Lower leg skin (tissue), 4 donors: ENCODE measurements at regions of chr9 and their contacts with region 1.

Region 1: GRCh38 chr9:93159601-93160471 is 24.1 kb upstream of the WNK2 start:
- DNase-seq: peak; percentile 60 to 96
- H3K4me3 ChIP-seq: no peak overlapping the region
- CTCF ChIP-seq: peak in 2 of 3 donors; percentile 38 to 83
- POLR2A ChIP-seq: no peak

Region 2: GRCh38 chr9:92917176-92917800 is 242.5 kb before region 1 on chr9:
- intact Hi-C with region 1: no loop called
- DNase-seq: no peak
- H3K4me3 ChIP-seq: no peak overlapping the region
- CTCF ChIP-seq: no peak
- POLR2A ChIP-seq: no peak

Region 3: DNA sequence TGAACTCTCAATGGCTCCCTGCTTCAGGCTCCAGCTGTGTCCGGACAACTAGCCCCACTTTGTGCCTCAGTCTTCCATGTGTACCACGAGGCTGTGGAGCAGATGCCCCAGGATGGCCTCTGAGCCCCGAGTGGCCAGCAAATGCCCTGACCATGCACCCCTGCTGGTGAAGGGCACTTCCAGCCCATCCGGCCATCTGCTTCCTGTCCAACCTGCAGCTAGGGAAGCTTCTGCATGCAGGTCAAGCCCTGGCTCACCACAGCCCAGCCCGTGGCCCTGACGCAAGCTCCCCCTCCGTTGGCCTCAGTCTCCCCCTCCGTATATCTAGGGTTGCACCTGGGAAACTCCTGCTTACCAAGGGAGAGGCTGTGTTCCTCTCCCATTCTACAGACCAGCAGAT is 30.6 kb before region 1 on chr9:
- intact Hi-C with region 1: loop called (anchors 1 kb)
- DNase-seq: no peak
- H3K4me3 ChIP-seq: no peak overlapping the region
- CTCF ChIP-seq: no peak
- POLR2A ChIP-seq: no peak

Region 4: DNA sequence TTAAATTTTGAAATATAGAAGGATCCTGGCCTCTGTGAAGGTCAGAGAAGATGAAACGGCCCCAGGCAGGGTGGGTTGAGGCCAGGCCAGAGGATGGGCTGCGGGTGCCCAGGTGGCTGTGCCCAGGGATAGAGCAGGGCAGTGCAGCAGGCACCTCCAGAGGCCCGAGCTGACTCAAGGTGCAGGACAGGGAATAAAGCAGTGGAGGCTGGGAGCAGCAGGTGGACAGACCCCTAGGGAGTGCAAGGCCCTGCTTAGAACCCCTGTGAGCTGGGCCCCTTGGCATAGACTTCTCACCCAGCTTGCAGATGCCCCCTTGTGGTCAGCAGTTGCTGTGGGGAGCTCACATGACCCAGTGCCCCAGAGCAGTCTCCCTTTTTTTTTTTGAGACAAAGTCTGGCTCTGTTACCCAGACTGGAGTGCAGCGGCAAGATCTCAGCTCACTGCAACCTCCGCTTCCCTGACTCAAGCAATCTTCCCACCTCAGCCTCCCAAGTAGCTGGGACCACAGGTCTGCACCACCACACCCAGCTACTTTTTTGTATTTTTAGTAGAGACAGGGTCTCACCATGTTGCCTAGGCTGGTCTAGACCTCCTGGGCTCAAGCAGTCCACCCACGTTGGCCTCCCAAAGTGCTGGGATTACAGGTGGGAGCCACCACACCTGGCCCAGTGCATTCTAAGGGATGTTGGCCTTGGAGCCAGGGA is 142.9 kb after region 1 on chr9:
- intact Hi-C with region 1: loop called (anchors 5 kb)
- DNase-seq: peak in 1 of 2 donors; percentile 81
- H3K4me3 ChIP-seq: no peak overlapping the region
- CTCF ChIP-seq: no peak
- POLR2A ChIP-seq: no peak

Region 5: DNA sequence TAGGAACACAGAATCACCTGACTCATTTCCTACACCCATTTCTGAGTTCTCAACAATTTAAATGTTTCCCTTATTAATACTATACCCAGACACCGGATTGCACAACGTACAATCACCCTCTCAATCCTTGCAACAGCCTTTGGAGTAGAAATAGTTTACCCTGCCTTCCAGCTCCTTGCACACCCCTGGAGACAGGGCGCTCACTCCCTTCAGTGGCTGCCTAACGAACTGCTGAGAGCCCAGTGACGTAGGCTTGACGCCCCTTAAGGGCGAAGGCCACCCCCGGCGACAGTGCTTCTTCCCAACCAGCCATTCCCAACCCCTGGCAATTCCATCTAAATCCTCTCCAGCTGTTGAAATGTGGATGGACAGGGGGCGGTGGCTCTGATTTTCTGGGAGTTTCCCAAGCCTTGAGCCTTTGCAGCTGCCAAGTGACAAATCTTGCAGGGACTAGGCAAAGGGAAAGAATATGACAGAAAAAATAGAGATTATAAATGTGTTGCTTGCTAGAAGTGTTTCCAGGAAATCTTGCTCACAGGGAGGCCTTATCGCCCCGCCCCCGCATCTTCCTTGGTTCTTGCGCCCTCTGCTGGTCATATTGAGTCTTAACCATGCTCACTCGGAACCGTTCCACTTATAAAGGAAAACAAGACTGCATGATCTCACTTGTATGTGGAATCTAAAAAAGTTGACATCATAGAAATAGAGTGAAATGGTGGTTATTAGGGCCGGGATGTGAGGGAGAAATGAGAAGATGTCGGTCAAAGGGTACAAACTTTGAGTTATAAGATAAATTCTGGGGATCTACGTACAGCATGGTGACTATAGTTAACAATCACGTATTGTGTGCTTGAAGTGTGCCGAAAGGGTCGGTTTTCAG is 803.0 kb after region 1 on chr9:
- intact Hi-C with region 1: loop called (anchors 10 kb)
- DNase-seq: peak; percentile 82 to 96
- H3K4me3 ChIP-seq: no peak overlapping the region
- CTCF ChIP-seq: peak in 1 of 3 donors; percentile 77
- POLR2A ChIP-seq: no peak